Psoas muscle (tissue), 8 donors: ENCODE measurements at regions of chr20 and their contacts with region 1.

Region 1: GRCh38 chr20:16573001-16573965 is at the start of gene KIF16B:
- DNase-seq: peak; percentile 92 to 95
- ATAC-seq: peak; percentile 93 to 96 (median 94)
- H3K4me3 ChIP-seq: peak within 1 kb of the TSS; percentile 89
- H3K27ac ChIP-seq: peak within 1 kb of the TSS; percentile 85
- H3K4me1 ChIP-seq: peaks cover 12% of the 10 kb centered on the region
- H3K27me3 ChIP-seq: no peaks in the 10 kb centered on the region
- CTCF ChIP-seq: no peak
- total RNA-seq, gene KIF16B: 18.9 to 27.7 (median 23.9) TPM

Region 2: GRCh38 chr20:16528078-16528477 is 45.2 kb before region 1 on chr20:
- intact Hi-C with region 1: loop called in 1 of 2 experiments (anchors 5 kb)
- DNase-seq: peak; percentile 47 to 78
- ATAC-seq: peak; percentile 94 to 98 (median 98)
- H3K4me3 ChIP-seq: peak overlapping the region; percentile 3
- H3K27ac ChIP-seq: peak overlapping the region; percentile 93
- H3K4me1 ChIP-seq: peaks cover 41% of the 10 kb centered on the region
- H3K27me3 ChIP-seq: no peaks in the 10 kb centered on the region
- CTCF ChIP-seq: no peak

Region 3: GRCh38 chr20:16539280-16540021 is 33.8 kb before region 1 on chr20:
- intact Hi-C with region 1: loop called in 1 of 2 experiments (anchors 5 kb)
- DNase-seq: no peak
- ATAC-seq: no peak
- H3K4me3 ChIP-seq: no peak overlapping the region
- H3K27ac ChIP-seq: no peak overlapping the region
- H3K4me1 ChIP-seq: peaks cover 14% of the 10 kb centered on the region
- H3K27me3 ChIP-seq: no peaks in the 10 kb centered on the region
- CTCF ChIP-seq: no peak

Region 4: GRCh38 chr20:16729565-16730456 is 156.5 kb after region 1 on chr20 and contains the start of gene SNRPB2:
- intact Hi-C with region 1: loop called in 1 of 2 experiments (anchors 1 kb)
- DNase-seq: peak; percentile 94 to 97
- ATAC-seq: peak; percentile 99 to 100 (median 99)
- H3K4me3 ChIP-seq: peak within 1 kb of the TSS; percentile 71
- H3K27ac ChIP-seq: peak within 1 kb of the TSS; percentile 88
- H3K4me1 ChIP-seq: peaks cover 17% of the 10 kb centered on the region
- H3K27me3 ChIP-seq: peaks cover 0 to 12% (median 3%) of the 10 kb centered on the region in 3 donors
- CTCF ChIP-seq: no peak
- total RNA-seq, gene SNRPB2: 33.1 to 43.0 (median 40.2) TPM

Region 5: GRCh38 chr20:17177341-17177740 is 604.1 kb after region 1 on chr20:
- intact Hi-C with region 1: no loop called
- DNase-seq: no peak
- ATAC-seq: no peak
- H3K4me3 ChIP-seq: no peak overlapping the region
- H3K27ac ChIP-seq: no peak overlapping the region
- H3K4me1 ChIP-seq: no peaks in the 10 kb centered on the region
- H3K27me3 ChIP-seq: no peaks in the 10 kb centered on the region
- CTCF ChIP-seq: no peak